B cell (primary cell): ENCODE measurements at regions of chr6 and their contacts with region 1.

Region 1: GRCh38 chr6:28838634-28839442 is 84.9 kb downstream of the TRIM27 start:
- DNase-seq: peak; percentile 86
- ATAC-seq: peak; percentile 74
- H3K4me3 ChIP-seq: peak overlapping the region; percentile 62 to 87 (median 68)
- H3K4me3 Mint-ChIP-seq: peak overlapping the region; percentile 90
- H3K27ac ChIP-seq: peak overlapping the region; percentile 19 to 55
- H3K27ac Mint-ChIP-seq: peak overlapping the region; percentile 92
- H3K4me1 ChIP-seq: peaks cover 11 to 19% of the 10 kb centered on the region in 2 donors
- H3K4me1 Mint-ChIP-seq: peaks cover 24% of the 10 kb centered on the region
- H3K27me3 ChIP-seq: peaks cover 0 to 25% (median 12%) of the 10 kb centered on the region in 4 experiments
- H3K27me3 Mint-ChIP-seq: peaks cover 30% of the 10 kb centered on the region
- CTCF ChIP-seq: peak; percentile 60

Region 2: DNA sequence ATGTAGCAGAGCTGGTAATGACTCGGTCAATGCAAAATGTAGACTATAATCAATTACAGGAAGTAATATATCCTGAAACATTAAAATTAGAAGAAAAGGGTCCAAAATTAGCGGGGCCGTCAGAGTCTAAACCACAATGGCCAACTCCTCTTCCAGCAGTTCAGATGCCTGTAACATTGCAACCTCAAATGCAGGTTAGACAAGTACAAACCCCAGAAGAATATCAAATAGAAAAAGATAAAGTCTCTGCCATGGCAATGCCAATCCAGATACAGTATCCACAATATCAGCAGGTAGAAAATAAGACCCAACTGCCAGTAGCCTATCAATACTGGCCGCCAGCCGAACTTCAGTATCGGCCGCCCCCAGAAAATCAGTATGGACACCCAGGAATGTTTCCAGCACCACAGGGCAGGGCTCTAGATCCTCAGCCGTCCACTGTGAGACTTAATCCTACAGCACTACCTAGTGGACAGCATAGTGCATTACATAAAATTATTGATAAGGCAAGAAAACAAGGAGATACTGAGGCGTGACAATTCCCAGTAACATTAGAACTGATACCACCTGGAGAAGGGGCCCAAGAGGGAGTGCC is 154.8 kb before region 1 on chr6:
- CTCF ChIA-PET with region 1: interaction called, 3 read pairs
- POLR2A ChIA-PET with region 1: no interaction called
- intact Hi-C with region 1: loop called (anchors 1 kb)
- DNase-seq: peak; percentile 53
- ATAC-seq: peak; percentile 54
- H3K4me3 ChIP-seq: no peak overlapping the region
- H3K4me3 Mint-ChIP-seq: no peak overlapping the region
- H3K27ac ChIP-seq: no peak overlapping the region
- H3K27ac Mint-ChIP-seq: no peak overlapping the region
- H3K4me1 ChIP-seq: no peaks in the 10 kb centered on the region
- H3K4me1 Mint-ChIP-seq: no peaks in the 10 kb centered on the region
- H3K27me3 ChIP-seq: peaks cover 0 to 40% (median 31%) of the 10 kb centered on the region in 4 experiments
- H3K27me3 Mint-ChIP-seq: peaks cover 71% of the 10 kb centered on the region
- CTCF ChIP-seq: peak; percentile 76

Region 3: GRCh38 chr6:28863604-28864320 is 24.9 kb after region 1 on chr6:
- CTCF ChIA-PET with region 1: interaction called, 20 read pairs
- POLR2A ChIA-PET with region 1: interaction called, 5 read pairs
- intact Hi-C with region 1: loop called (anchors 1 kb)
- DNase-seq: peak; percentile 88
- ATAC-seq: peak; percentile 26
- H3K4me3 ChIP-seq: peak overlapping the region; percentile 54 to 78 (median 75)
- H3K4me3 Mint-ChIP-seq: peak overlapping the region; percentile 83
- H3K27ac ChIP-seq: no peak overlapping the region
- H3K27ac Mint-ChIP-seq: peak overlapping the region; percentile 94
- H3K4me1 ChIP-seq: peaks cover 14 to 24% of the 10 kb centered on the region in 2 donors
- H3K4me1 Mint-ChIP-seq: peaks cover 28% of the 10 kb centered on the region
- H3K27me3 ChIP-seq: peaks cover 0 to 4% (median 0%) of the 10 kb centered on the region in 4 experiments
- H3K27me3 Mint-ChIP-seq: peaks cover 10% of the 10 kb centered on the region
- CTCF ChIP-seq: no peak

Region 4: GRCh38 chr6:28923318-28924102 is 84.7 kb after region 1 on chr6 and contains the start of gene TRIM27:
- CTCF ChIA-PET with region 1: interaction called, 8 read pairs
- POLR2A ChIA-PET with region 1: no interaction called
- intact Hi-C with region 1: loop called (anchors 1 kb)
- DNase-seq: peak; percentile 90
- ATAC-seq: peak; percentile 86
- H3K4me3 ChIP-seq: peak within 1 kb of the TSS; percentile 71 to 97 (median 92)
- H3K4me3 Mint-ChIP-seq: peak within 1 kb of the TSS; percentile 90
- H3K27ac ChIP-seq: peak within 1 kb of the TSS; percentile 81 to 83
- H3K27ac Mint-ChIP-seq: peak within 1 kb of the TSS; percentile 97
- H3K4me1 ChIP-seq: peaks cover 30% of the 10 kb centered on the region in 2 donors
- H3K4me1 Mint-ChIP-seq: peaks cover 34% of the 10 kb centered on the region
- H3K27me3 ChIP-seq: no peaks in the 10 kb centered on the region
- H3K27me3 Mint-ChIP-seq: no peaks in the 10 kb centered on the region
- CTCF ChIP-seq: peak; percentile 21
- total RNA-seq, gene TRIM27: 66.7 and 70.0 TPM in 2 replicates

Region 5: DNA sequence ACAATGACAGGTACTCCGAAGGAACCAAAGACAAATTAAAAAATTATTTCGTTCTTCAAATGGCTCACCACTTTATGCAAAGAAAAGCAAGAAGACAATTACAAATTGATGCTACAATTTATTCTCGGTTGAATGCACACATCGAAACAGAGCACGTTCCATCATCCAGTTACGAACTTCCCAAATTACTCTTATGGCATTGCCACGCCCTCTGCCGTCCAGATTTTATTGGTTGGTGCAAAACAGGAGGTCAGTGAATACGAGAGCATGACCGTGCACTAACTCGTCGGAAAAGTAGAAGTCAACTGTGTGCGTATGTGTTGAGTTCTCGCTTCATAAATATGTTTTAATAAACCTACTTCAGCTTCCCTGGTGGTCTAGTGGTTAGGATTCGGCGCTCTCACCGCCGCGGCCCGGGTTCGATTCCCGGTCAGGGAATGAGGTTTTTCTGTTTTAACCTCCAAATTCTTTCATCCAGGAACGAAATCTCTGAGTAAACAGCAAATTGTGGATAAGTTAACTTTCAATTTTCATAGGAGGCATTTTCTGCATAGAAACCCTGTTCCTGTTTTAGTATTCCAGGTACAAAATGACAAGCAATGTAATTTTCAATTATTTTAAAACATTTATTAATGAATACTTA is 143.1 kb after region 1 on chr6:
- CTCF ChIA-PET with region 1: interaction called, 34 read pairs
- POLR2A ChIA-PET with region 1: no interaction called
- intact Hi-C with region 1: loop called (anchors 1 kb)
- DNase-seq: peak; percentile 91
- ATAC-seq: peak; percentile 70
- H3K4me3 ChIP-seq: peak overlapping the region; percentile 67 to 97 (median 75)
- H3K4me3 Mint-ChIP-seq: peak overlapping the region; percentile 93
- H3K27ac ChIP-seq: no peak overlapping the region
- H3K27ac Mint-ChIP-seq: peak overlapping the region; percentile 96
- H3K4me1 ChIP-seq: peaks cover 36 to 37% of the 10 kb centered on the region in 2 donors
- H3K4me1 Mint-ChIP-seq: peaks cover 55% of the 10 kb centered on the region
- H3K27me3 ChIP-seq: peaks cover 0 to 28% (median 14%) of the 10 kb centered on the region in 4 experiments
- H3K27me3 Mint-ChIP-seq: peaks cover 28% of the 10 kb centered on the region
- CTCF ChIP-seq: no peak

Region 6: GRCh38 chr6:29016559-29017427 is 178.0 kb after region 1 on chr6:
- CTCF ChIA-PET with region 1: interaction called, 202 read pairs
- POLR2A ChIA-PET with region 1: no interaction called
- intact Hi-C with region 1: loop called (anchors 1 kb)
- DNase-seq: peak; percentile 90
- ATAC-seq: peak; percentile 84
- H3K4me3 ChIP-seq: peak overlapping the region; percentile 37 to 67 (median 57)
- H3K4me3 Mint-ChIP-seq: peak overlapping the region; percentile 85
- H3K27ac ChIP-seq: no peak overlapping the region
- H3K27ac Mint-ChIP-seq: peak overlapping the region; percentile 47
- H3K4me1 ChIP-seq: peaks cover 11 to 16% of the 10 kb centered on the region in 2 donors
- H3K4me1 Mint-ChIP-seq: peaks cover 19% of the 10 kb centered on the region
- H3K27me3 ChIP-seq: peaks cover 0 to 48% (median 32%) of the 10 kb centered on the region in 4 experiments
- H3K27me3 Mint-ChIP-seq: peaks cover 47% of the 10 kb centered on the region
- CTCF ChIP-seq: peak; percentile 91

Region 7: DNA sequence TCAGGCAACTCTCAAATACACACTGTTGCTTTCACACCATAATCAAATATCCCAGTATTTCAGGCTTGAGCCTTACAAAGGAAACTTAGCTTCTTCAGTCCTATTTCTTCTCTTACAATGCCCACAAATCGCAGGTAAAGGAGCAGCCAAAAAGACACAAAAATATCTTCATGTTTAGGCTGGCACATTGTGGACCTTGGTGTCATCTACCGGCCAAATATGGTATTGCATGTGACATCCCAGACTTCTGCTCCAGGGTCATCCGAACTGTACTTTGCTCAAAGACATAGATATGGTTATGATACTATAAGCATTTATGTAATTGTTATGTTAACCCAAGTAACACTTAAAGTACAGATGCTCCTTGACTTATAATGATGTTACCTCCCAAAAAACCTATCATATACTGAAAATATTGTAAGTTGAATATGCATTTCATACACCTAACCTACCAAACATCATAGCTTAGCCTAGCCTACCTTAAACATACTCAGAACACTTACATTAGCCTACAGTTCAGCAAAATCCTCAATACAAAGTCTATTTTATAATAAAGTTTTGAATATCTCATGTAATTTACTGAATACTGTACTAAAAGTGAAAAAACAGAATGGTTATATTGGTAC is 750.7 kb after region 1 on chr6:
- CTCF ChIA-PET with region 1: interaction called, 15 read pairs
- POLR2A ChIA-PET with region 1: no interaction called
- intact Hi-C with region 1: no loop called
- DNase-seq: peak; percentile 72
- ATAC-seq: peak; percentile 80
- H3K4me3 ChIP-seq: no peak overlapping the region
- H3K4me3 Mint-ChIP-seq: no peak overlapping the region
- H3K27ac ChIP-seq: no peak overlapping the region
- H3K27ac Mint-ChIP-seq: no peak overlapping the region
- H3K4me1 ChIP-seq: peaks cover 0 to 5% of the 10 kb centered on the region in 2 donors
- H3K4me1 Mint-ChIP-seq: peaks cover 2% of the 10 kb centered on the region
- H3K27me3 ChIP-seq: peaks cover 0 to 3% (median 0%) of the 10 kb centered on the region in 4 experiments
- H3K27me3 Mint-ChIP-seq: peaks cover 30% of the 10 kb centered on the region
- CTCF ChIP-seq: peak; percentile 98